Activated CD4-positive, alpha-beta T cell treated with anti-CD3 and anti-CD28 coated beads, Interleukin-2, amount 10 ng/mL, durations not matched to agents 24 days and 14 days (primary cell): ENCODE measurements at regions of chr22 and their contacts with region 1.

Region 1: DNA sequence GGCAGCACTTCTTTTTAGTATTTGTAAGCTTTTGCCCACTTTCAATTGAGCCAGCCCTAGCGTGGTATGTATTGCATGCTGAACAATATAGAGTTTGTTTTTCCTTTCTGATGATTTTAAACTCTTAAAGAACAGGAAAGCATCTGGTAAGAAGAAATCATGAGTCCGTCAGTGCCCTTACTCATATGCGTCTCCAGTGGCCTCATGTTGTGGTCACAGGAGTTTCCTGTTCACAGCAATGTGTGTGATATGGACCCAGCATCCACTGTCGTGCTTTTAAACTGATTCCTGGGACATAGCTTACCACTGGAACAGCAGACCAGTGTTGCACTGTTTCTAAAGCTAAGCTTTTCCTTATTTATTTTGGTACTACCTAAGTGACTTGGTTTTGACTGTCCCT is 40.1 kb downstream of the BID start:
- DNase-seq: peak; percentile 71
- H3K4me3 Mint-ChIP-seq: no peak overlapping the region
- H3K27ac Mint-ChIP-seq: peak overlapping the region; percentile 18
- H3K4me1 Mint-ChIP-seq: peaks cover 14% of the 10 kb centered on the region
- H3K27me3 Mint-ChIP-seq: no peaks in the 10 kb centered on the region

Region 2: DNA sequence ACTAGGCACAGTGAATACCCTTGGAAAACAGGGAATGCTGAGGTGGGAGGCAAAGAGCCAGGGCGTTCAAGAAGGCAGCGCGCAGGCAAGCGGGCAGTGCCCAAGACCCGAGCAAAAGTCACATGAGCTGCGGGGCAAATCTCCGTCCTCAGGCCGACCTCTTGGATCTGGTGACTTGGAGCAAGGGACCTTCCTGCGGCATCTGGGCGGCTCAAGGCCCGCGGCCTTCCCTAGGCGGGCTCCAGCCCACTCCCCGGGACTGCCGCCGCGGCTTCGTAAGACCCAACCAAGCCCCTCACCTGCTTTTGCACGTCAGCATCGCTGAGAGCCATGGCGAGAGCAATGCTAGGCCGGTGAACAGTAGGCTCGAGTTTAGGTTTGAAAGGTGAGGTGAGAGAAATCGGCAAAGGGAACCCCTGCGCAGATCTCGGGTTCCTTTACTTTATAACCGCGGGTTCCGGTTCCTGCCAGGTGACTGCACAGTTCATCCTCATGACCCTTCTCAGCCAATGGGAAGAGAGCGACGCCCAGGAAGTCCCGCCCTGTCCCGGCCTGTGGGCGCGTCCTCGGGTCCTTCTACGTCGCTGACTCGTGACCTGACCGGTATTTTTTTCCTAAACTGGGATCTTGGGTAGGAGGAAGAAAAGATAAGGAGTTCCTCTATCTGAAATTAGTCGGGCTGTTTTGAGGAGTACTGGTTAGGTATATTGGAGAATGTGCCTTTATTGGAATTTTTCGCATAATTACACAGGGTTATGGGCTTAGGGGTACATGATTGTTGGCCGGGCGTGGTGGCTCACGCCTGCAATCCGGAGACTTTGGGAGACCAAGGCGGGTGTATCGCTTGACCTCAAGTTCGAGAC is 105.7 kb before region 1 on chr22 and contains the start of gene ATP6V1E1:
- intact Hi-C with region 1: loop called (anchors 5 kb)
- DNase-seq: peak; percentile 99
- H3K4me3 Mint-ChIP-seq: peak within 1 kb of the TSS; percentile 93
- H3K27ac Mint-ChIP-seq: peak within 1 kb of the TSS; percentile 89
- H3K4me1 Mint-ChIP-seq: peaks cover 16% of the 10 kb centered on the region
- H3K27me3 Mint-ChIP-seq: no peaks in the 10 kb centered on the region
- total RNA-seq, gene ATP6V1E1: 109 and 114 TPM in 2 replicates

Region 3: GRCh38 chr22:17767233-17768065 is 33.3 kb after region 1 on chr22:
- intact Hi-C with region 1: loop called (anchors 2 kb)
- DNase-seq: peak; percentile 86
- H3K4me3 Mint-ChIP-seq: peak overlapping the region; percentile 40
- H3K27ac Mint-ChIP-seq: peak overlapping the region; percentile 63
- H3K4me1 Mint-ChIP-seq: peaks cover 33% of the 10 kb centered on the region
- H3K27me3 Mint-ChIP-seq: peaks cover 27% of the 10 kb centered on the region

Region 4: GRCh38 chr22:17786435-17787161 is 52.4 kb after region 1 on chr22:
- intact Hi-C with region 1: no loop called
- DNase-seq: no peak
- H3K4me3 Mint-ChIP-seq: no peak overlapping the region
- H3K27ac Mint-ChIP-seq: no peak overlapping the region
- H3K4me1 Mint-ChIP-seq: peaks cover 1% of the 10 kb centered on the region
- H3K27me3 Mint-ChIP-seq: peaks cover 6% of the 10 kb centered on the region